Activated CD8-positive, alpha-beta T cell treated with anti-CD3 and anti-CD28 coated beads for 36 hours (primary cell): ENCODE measurements at regions of chr19 and their contacts with region 1.

Region 1: DNA sequence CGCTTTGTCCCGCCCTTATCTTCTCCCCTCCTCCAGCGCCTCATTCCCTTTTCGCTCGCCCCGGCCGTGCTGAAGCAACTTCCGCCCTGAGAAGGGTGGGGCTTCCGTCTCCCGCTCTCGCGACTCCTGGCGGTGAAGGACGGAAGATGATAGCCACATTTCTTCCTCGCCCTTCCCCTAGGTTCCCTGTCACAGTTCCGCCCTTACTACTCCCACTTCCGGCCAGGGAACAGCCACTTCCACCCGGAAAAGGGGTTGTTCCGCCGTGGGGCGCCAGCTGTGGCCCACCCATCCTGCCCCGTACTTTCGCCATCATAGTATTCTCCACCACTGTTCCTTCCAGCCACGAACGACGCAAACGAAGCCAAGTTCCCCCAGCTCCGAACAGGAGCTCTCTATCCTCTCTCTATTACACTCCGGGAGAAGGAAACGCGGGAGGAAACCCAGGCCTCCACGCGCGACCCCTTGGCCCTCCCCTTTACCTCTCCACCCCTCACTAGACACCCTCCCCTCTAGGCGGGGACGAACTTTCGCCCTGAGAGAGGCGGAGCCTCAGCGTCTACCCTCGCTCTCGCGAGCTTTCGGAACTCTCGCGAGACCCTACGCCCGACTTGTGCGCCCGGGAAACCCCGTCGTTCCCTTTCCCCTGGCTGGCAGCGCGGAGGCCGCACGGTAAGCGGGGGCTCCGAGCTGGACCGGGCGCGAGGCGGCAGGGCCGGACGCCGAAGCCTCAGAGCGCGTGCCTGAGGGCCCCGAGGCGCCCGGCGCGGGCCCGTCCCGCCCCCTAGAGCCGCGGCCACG is at the start of gene RPS19:
- DNase-seq: peak; percentile 98
- ATAC-seq: peak; percentile 90
- H3K4me3 Mint-ChIP-seq: peak within 1 kb of the TSS; percentile 83
- H3K27ac Mint-ChIP-seq: peak within 1 kb of the TSS; percentile 96
- H3K4me1 Mint-ChIP-seq: peaks cover 39% of the 10 kb centered on the region
- H3K27me3 Mint-ChIP-seq: no peaks in the 10 kb centered on the region
- CTCF ChIP-seq: peak; percentile 65
- total RNA-seq, gene RPS19: 3,454 to 3,479 TPM

Region 2: DNA sequence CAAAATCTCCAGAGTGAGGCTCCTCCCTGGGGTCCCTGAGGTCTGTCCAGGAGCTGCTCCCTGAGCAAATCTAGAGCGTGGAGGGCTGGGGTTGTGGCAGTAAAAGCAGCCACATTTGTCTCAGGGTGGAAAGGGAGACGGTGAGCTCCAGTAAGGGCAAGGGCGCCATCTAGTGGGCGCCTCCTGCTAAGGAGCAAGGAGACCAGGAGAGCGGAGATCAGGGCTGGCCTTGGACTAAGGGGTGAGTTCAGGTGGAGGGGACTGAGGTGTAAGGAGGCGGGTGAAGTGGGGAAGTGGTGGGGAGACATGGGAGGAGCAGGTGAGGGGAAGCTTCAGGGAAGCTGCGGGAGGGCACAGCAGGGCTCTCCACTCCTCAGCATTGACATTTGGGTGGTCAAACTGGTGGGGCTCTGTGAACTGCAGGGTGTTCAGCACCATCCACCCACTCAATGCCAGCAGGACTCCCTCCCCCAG is 289.1 kb before region 1 on chr19:
- CTCF ChIA-PET with region 1: no interaction called
- POLR2A ChIA-PET with region 1: no interaction called
- intact Hi-C with region 1: no loop called
- DNase-seq: peak; percentile 92
- ATAC-seq: peak; percentile 96
- H3K4me3 Mint-ChIP-seq: no peak overlapping the region
- H3K27ac Mint-ChIP-seq: no peak overlapping the region
- H3K4me1 Mint-ChIP-seq: peaks cover 18% of the 10 kb centered on the region
- H3K27me3 Mint-ChIP-seq: peaks cover 9% of the 10 kb centered on the region
- CTCF ChIP-seq: peak; percentile 95

Region 3: DNA sequence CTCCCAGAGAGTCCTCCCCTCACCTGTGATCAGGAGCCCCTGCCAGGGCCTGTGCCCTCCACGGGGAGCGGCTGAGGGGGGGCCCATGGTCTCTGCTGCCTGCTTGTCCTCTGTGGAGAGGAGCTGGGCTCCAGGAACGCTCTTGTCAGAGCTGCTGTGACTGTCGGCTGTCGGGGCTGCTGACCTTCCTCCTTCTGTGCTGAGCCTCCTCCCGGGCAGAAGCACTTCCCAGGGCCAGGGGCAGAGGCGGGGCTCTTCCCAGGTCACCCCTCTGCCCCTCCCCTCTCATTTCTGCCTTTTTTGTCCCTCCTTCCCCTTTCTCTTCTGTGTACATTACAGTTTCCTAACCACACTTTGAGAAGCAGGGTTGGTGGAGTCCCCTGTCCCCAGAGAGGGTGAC is 232.9 kb before region 1 on chr19 and contains the start of gene CEACAM4:
- CTCF ChIA-PET with region 1: no interaction called
- POLR2A ChIA-PET with region 1: no interaction called
- intact Hi-C with region 1: no loop called
- DNase-seq: no peak
- ATAC-seq: no peak
- H3K4me3 Mint-ChIP-seq: no peak within 1 kb of the TSS
- H3K27ac Mint-ChIP-seq: no peak within 1 kb of the TSS
- H3K4me1 Mint-ChIP-seq: no peaks in the 10 kb centered on the region
- H3K27me3 Mint-ChIP-seq: peaks cover 36% of the 10 kb centered on the region
- CTCF ChIP-seq: no peak
- total RNA-seq, gene CEACAM4: not detected

Region 4: DNA sequence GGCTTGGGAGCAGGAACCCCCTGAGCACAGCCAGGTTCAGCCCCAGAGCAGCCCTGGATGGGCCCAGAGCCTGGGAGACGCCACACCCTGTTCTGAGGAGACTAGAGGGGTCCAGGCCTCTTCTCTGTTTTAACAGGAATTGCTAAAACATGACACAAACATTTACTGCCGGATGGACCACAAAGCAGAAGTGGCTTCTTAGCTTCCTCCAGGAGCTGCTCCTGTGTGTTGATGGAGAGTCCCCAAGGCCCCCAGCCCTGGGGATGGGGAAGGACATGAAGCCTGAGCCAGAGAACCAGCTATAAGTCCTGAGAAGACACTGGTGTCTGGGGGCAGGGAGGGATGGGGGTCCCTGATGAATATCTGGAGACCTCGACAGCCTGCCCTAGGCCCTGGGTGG is 48.8 kb before region 1 on chr19:
- CTCF ChIA-PET with region 1: no interaction called
- POLR2A ChIA-PET with region 1: no interaction called
- intact Hi-C with region 1: no loop called
- DNase-seq: no peak
- ATAC-seq: no peak
- H3K4me3 Mint-ChIP-seq: no peak overlapping the region
- H3K27ac Mint-ChIP-seq: no peak overlapping the region
- H3K4me1 Mint-ChIP-seq: peaks cover 6% of the 10 kb centered on the region
- H3K27me3 Mint-ChIP-seq: peaks cover 9% of the 10 kb centered on the region
- CTCF ChIP-seq: no peak

Region 5: DNA sequence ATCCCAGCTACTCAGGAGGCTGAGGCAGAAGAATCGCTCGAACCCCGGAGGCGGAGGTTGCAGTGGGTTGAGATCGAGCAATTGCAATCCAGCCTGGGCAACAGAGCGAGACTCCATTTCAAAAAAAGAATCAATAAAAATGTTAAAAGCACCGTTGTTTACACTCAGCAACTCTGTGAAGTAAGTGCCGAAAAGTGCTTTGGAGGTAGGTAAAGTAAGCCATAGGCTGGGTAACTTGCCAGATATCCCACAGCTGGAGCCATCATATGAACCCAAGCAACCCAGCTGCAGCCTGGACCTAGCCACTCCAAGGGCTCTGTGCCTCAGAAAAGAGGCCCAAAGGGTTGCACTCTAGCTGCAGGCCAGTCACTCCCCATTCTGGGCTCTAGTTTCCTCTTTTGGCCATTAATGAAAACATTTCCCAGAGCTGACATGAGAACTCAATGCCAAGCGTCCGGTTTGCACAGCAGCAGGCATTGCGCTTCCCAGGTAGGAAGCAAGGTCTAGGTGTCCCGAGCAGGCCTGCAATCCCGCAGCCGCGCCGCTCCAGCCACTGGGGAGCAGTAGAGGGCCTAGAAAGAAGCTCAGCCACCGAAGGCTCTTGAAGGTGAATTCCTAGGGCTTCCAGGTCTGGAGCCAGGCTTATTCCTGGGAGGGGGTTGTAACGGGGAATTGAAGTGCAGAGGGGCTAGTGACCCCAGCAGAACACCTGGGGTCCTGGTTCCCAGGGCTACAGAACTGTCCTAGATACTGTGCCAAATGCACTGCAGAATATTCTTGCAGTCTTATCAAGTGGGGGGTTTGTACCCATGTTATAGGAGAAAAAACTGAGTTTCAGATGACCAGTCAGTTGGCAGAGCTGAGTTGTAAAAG is 13.2 kb after region 1 on chr19:
- CTCF ChIA-PET with region 1: interaction called, 48 read pairs
- POLR2A ChIA-PET with region 1: interaction called, 169 read pairs
- intact Hi-C with region 1: no loop called
- DNase-seq: peak; percentile 80
- ATAC-seq: no peak
- H3K4me3 Mint-ChIP-seq: no peak overlapping the region
- H3K27ac Mint-ChIP-seq: peak overlapping the region; percentile 95
- H3K4me1 Mint-ChIP-seq: peaks cover 80% of the 10 kb centered on the region
- H3K27me3 Mint-ChIP-seq: no peaks in the 10 kb centered on the region
- CTCF ChIP-seq: peak; percentile 84

Region 6: GRCh38 chr19:41892173-41892902 is 32.5 kb after region 1 on chr19:
- CTCF ChIA-PET with region 1: interaction called, 16 read pairs
- POLR2A ChIA-PET with region 1: interaction called, 59 read pairs
- intact Hi-C with region 1: no loop called
- DNase-seq: no peak
- ATAC-seq: no peak
- H3K4me3 Mint-ChIP-seq: no peak overlapping the region
- H3K27ac Mint-ChIP-seq: peak overlapping the region; percentile 73
- H3K4me1 Mint-ChIP-seq: peaks cover 72% of the 10 kb centered on the region
- H3K27me3 Mint-ChIP-seq: no peaks in the 10 kb centered on the region
- CTCF ChIP-seq: no peak

Region 7: GRCh38 chr19:41939861-41940730 is 80.3 kb after region 1 on chr19:
- CTCF ChIA-PET with region 1: interaction called, 10 read pairs
- POLR2A ChIA-PET with region 1: interaction called, 39 read pairs
- intact Hi-C with region 1: no loop called
- DNase-seq: peak; percentile 69
- ATAC-seq: peak; percentile 50
- H3K4me3 Mint-ChIP-seq: peak overlapping the region; percentile 78
- H3K27ac Mint-ChIP-seq: peak overlapping the region; percentile 90
- H3K4me1 Mint-ChIP-seq: peaks cover 44% of the 10 kb centered on the region
- H3K27me3 Mint-ChIP-seq: peaks cover 17% of the 10 kb centered on the region
- CTCF ChIP-seq: no peak

Region 8: GRCh38 chr19:41951686-41952172 is 91.9 kb after region 1 on chr19:
- CTCF ChIA-PET with region 1: interaction called, 24 read pairs
- POLR2A ChIA-PET with region 1: interaction called, 39 read pairs
- intact Hi-C with region 1: no loop called
- DNase-seq: peak; percentile 94
- ATAC-seq: peak; percentile 96
- H3K4me3 Mint-ChIP-seq: no peak overlapping the region
- H3K27ac Mint-ChIP-seq: peak overlapping the region; percentile 58
- H3K4me1 Mint-ChIP-seq: peaks cover 28% of the 10 kb centered on the region
- H3K27me3 Mint-ChIP-seq: no peaks in the 10 kb centered on the region
- CTCF ChIP-seq: peak; percentile 100